ENCODE measurements at regions of chr20 and their contacts with region 1.

Region 1: GRCh38 chr20:9407805-9408421 is 106.5 kb upstream of the LAMP5 start:
- H3K4me3 ChIP-seq: no peak overlapping the region
- H3K27ac ChIP-seq: no peak overlapping the region
- H3K4me1 ChIP-seq: no peaks in the 10 kb centered on the region
- CTCF ChIP-seq: peak; percentile 32; the same call in 1 of the 2 replicates

Region 2: GRCh38 chr20:9510911-9511310 is 103.0 kb after region 1 on chr20:
- CTCF ChIA-PET with region 1: no interaction called
- POLR2A ChIA-PET with region 1: no interaction called
- H3K4me3 ChIP-seq: no peak overlapping the region
- H3K27ac ChIP-seq: no peak overlapping the region
- H3K4me1 ChIP-seq: no peaks in the 10 kb centered on the region; the same call in 1 of the 2 replicates
- CTCF ChIP-seq: no peak

Region 3: GRCh38 chr20:9557411-9557810 is 149.5 kb after region 1 on chr20:
- CTCF ChIA-PET with region 1: interaction called, 13 read pairs
- POLR2A ChIA-PET with region 1: no interaction called
- H3K4me3 ChIP-seq: no peak overlapping the region
- H3K27ac ChIP-seq: no peak overlapping the region
- H3K4me1 ChIP-seq: no peaks in the 10 kb centered on the region
- CTCF ChIP-seq: no peak

Region 4: DNA sequence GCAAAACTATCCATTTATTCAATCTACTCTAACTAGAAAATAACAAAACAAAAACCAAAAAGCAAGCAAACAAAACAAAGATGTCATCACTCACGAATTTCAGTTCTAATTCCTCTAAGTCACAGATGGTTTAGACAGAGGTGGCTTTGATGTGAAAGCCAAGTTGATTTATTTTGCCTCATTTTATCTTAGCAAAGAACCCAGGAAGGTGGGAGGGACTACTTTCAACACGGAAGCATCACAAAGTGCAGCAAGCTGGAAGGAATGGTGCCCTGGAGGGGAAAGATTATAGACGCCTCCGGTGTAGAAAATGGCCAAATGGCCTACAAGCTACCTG is 194.9 kb after region 1 on chr20:
- CTCF ChIA-PET with region 1: interaction called, 234 read pairs
- POLR2A ChIA-PET with region 1: no interaction called
- H3K4me3 ChIP-seq: no peak overlapping the region
- H3K27ac ChIP-seq: no peak overlapping the region
- H3K4me1 ChIP-seq: no peaks in the 10 kb centered on the region
- CTCF ChIP-seq: no peak

Region 5: DNA sequence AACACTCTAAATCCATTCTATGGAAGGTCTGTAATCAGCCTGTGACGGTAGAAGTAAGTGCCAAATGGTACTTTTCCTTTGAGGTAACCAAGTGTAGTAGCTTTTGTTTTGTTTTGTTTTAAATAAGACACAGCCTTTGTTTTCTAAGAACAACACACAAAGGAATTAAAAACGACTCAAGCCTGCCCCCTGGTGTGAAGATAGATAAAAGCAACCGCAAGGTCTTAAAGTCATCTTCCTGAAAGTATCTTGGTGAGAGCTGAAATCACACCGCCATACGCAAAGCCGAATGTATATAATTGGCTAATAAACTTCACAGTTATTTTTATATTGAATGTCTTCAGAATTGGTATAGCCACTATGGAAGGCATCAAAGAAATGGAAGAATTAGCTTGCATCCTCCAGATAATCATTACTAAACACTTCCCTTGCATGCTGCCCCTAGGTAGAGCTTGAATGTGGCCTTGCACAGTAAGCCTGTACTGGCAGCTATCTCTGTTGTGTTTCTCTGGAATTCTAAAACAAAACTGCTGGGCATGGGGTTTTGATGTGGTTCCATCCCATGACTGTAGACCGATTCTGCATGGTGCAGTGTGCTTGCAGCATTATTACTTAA is 202.1 kb after region 1 on chr20:
- CTCF ChIA-PET with region 1: interaction called, 234 read pairs
- POLR2A ChIA-PET with region 1: interaction called, 3 read pairs
- H3K4me3 ChIP-seq: no peak overlapping the region
- H3K27ac ChIP-seq: no peak overlapping the region
- H3K4me1 ChIP-seq: no peaks in the 10 kb centered on the region
- CTCF ChIP-seq: no peak; the same call in 1 of the 2 replicates

Region 6: GRCh38 chr20:9616833-9617489 is 209.0 kb after region 1 on chr20:
- CTCF ChIA-PET with region 1: interaction called, 234 read pairs
- POLR2A ChIA-PET with region 1: no interaction called
- H3K4me3 ChIP-seq: no peak overlapping the region
- H3K27ac ChIP-seq: no peak overlapping the region
- H3K4me1 ChIP-seq: no peaks in the 10 kb centered on the region
- CTCF ChIP-seq: 0 out of 2 replicates have a peak, but pooled peaks have one; percentile 10

Measured in HEK293 (cell line).